Endothelial cell of umbilical vein (primary cell): ENCODE measurements at regions of chr14 and their contacts with region 1.

Region 1: GRCh38 chr14:34714320-34715126 is at the start of gene CFL2:
- DNase-seq: peak; percentile 81
- H3K4me3 ChIP-seq: peak within 1 kb of the TSS; percentile 60 to 95 (median 82)
- H3K27ac ChIP-seq: peak within 1 kb of the TSS; percentile 84
- H3K4me1 ChIP-seq: peaks cover 23% of the 10 kb centered on the region
- H3K27me3 ChIP-seq: no peaks in the 10 kb centered on the region
- CTCF ChIP-seq: no peak
- POLR2A ChIP-seq: peak; percentile 69
- total RNA-seq, gene CFL2: 91.9 and 98.1 TPM in 2 replicates

Region 2: DNA sequence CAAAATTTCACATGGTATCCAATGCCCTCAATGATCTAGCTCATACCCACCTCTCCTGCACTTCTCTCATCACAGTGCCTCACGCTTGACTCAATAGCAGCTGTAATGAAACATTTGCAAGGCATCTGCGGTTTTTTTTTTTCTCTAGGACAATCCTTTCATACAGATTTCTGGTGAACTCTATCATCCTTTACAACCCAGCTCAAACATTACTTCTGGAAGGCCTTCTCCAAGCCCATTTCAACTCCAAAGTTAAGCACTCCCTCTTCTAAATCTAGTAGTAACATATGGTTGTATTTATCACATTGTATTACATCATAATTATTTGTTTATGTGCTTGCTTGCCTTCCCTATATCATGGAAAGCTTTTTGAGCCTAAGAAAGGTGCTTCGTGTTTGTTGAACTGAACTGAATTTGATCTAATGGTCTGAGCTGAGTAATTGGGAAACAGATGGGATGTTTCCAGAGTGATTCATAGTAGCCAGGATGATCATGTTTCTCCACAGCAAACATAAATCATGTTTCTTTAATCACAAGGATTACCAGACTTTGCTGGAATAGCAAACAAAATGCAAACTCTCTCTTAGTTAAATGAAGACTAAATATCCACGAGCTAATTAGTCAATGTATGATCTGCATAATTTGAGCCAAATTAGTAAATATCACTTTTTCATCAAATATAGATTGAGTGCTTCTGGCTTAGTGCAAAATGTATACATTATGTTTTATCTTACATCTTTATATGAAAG is 14.5 kb before region 1 on chr14:
- CTCF ChIA-PET with region 1: interaction called, 8 read pairs
- POLR2A ChIA-PET with region 1: interaction called, 10 read pairs
- dilution Hi-C with region 1: no loop called
- intact Hi-C with region 1: no loop called
- DNase-seq: peak; percentile 93
- H3K4me3 ChIP-seq: no peak overlapping the region
- H3K27ac ChIP-seq: peak overlapping the region; percentile 80
- H3K4me1 ChIP-seq: peaks cover 19% of the 10 kb centered on the region
- H3K27me3 ChIP-seq: no peaks in the 10 kb centered on the region
- CTCF ChIP-seq: no peak
- POLR2A ChIP-seq: no peak

Region 3: DNA sequence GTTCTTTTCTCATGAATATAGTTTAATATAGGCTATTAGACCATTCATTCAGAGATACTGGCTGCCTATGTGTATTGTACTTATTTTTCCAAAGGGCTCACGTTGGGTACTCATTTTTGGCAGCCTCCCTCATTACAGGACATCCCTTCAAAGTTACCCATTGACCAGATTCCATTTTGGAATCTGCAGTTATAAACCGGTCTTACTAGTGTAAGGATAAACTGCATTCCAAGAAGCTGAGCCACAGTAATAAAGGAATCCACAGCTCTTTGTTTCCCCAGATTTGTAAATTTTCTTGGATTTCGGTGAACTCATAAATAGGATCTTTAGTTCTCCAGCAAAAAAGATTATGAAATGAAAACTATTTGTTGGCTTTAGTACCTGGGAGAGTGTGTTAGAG is 18.7 kb after region 1 on chr14:
- CTCF ChIA-PET with region 1: no interaction called
- POLR2A ChIA-PET with region 1: no interaction called
- dilution Hi-C with region 1: no loop called
- intact Hi-C with region 1: no loop called
- DNase-seq: no peak
- H3K4me3 ChIP-seq: no peak overlapping the region
- H3K27ac ChIP-seq: no peak overlapping the region
- H3K4me1 ChIP-seq: no peaks in the 10 kb centered on the region
- H3K27me3 ChIP-seq: no peaks in the 10 kb centered on the region
- CTCF ChIP-seq: no peak
- POLR2A ChIP-seq: no peak

Region 4: DNA sequence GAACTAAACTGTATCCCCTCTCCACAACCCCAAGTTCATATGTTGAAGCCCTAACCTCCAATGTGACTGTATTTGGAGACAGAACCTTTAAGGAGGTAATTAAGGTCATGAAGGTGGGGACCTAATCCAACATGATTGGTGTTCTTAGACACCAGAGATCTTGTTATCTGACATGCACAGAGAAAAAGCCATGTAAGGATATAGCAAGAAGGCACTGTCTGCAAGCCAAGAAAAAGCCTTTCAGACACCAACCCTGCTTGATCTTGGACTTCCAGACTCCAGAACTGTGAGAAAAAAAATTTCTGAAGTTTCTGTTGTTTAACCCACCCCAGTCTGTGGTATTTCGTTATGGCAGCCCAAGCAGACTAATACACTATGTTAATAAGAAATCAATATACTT is 62.1 kb after region 1 on chr14:
- CTCF ChIA-PET with region 1: no interaction called
- POLR2A ChIA-PET with region 1: no interaction called
- dilution Hi-C with region 1: no loop called
- intact Hi-C with region 1: no loop called
- DNase-seq: no peak
- H3K4me3 ChIP-seq: no peak overlapping the region
- H3K27ac ChIP-seq: no peak overlapping the region
- H3K4me1 ChIP-seq: peaks cover 16% of the 10 kb centered on the region
- H3K27me3 ChIP-seq: no peaks in the 10 kb centered on the region
- CTCF ChIP-seq: no peak
- POLR2A ChIP-seq: no peak